A549 (cell line): ENCODE measurements at regions of chrX and their contacts with region 1.

Region 1: DNA sequence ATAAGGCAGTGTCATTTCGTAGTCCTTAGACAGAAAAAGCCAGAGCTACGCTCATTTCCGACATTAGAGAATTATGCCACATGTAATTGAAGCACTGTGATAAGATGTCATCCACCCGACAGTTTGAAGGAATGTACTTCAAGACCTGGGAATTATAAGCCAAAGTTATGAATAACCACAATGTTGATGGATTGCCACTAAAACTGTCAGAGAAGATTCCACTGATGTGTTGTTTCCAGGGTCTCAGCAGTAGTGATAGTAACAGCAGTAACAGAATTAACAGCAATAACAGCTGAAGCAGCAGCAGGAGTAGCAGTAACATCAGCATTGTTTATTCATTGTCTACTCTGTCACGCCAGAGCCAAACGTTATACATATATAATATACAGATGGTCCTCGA is 24.7 kb downstream of the RAB33A start:
- DNase-seq: no peak
- ATAC-seq: no peak
- H3K4me3 ChIP-seq: no peak overlapping the region
- H3K27ac ChIP-seq: no peak overlapping the region
- H3K4me1 ChIP-seq: no peaks in the 10 kb centered on the region
- CTCF ChIP-seq: no peak
- EP300 ChIP-seq: no peak
- POLR2A ChIP-seq: no peak
- RAD21 ChIP-seq: no peak

Region 2: GRCh38 chrX:129772796-129773431 is 423.6 kb before region 1 on chrX:
- CTCF ChIA-PET with region 1: no interaction called
- POLR2A ChIA-PET with region 1: no interaction called
- DNase-seq: no peak
- ATAC-seq: no peak
- H3K4me3 ChIP-seq: no peak overlapping the region
- H3K27ac ChIP-seq: no peak overlapping the region
- H3K4me1 ChIP-seq: no peaks in the 10 kb centered on the region
- CTCF ChIP-seq: no peak
- EP300 ChIP-seq: no peak
- POLR2A ChIP-seq: no peak
- RAD21 ChIP-seq: no peak

Region 3: GRCh38 chrX:130136497-130136896 is 60.0 kb before region 1 on chrX:
- CTCF ChIA-PET with region 1: interaction called, 10 read pairs
- POLR2A ChIA-PET with region 1: no interaction called
- DNase-seq: no peak
- ATAC-seq: no peak
- H3K4me3 ChIP-seq: no peak overlapping the region
- H3K27ac ChIP-seq: no peak overlapping the region
- H3K4me1 ChIP-seq: no peaks in the 10 kb centered on the region
- CTCF ChIP-seq: no peak
- EP300 ChIP-seq: no peak
- POLR2A ChIP-seq: no peak
- RAD21 ChIP-seq: no peak

Region 4: GRCh38 chrX:130147631-130148030 is 48.8 kb before region 1 on chrX:
- CTCF ChIA-PET with region 1: interaction called, 15 read pairs
- POLR2A ChIA-PET with region 1: no interaction called
- DNase-seq: no peak
- ATAC-seq: no peak
- H3K4me3 ChIP-seq: no peak overlapping the region
- H3K27ac ChIP-seq: no peak overlapping the region
- H3K4me1 ChIP-seq: no peaks in the 10 kb centered on the region
- CTCF ChIP-seq: no peak
- EP300 ChIP-seq: no peak
- POLR2A ChIP-seq: no peak
- RAD21 ChIP-seq: no peak